ENCODE measurements at regions of chr5 and their contacts with region 1.

Region 1: GRCh38 chr5:141412854-141413539 is at the start of gene PCDHGA10:
- DNase-seq: peak; percentile 86
- H3K4me3 Mint-ChIP-seq: peak within 1 kb of the TSS; percentile 86
- H3K27ac Mint-ChIP-seq: no peak within 1 kb of the TSS
- H3K4me1 Mint-ChIP-seq: peaks cover 12% of the 10 kb centered on the region
- H3K27me3 Mint-ChIP-seq: peaks cover 51% of the 10 kb centered on the region
- total RNA-seq, gene PCDHGA10: 0.07 and 0.21 TPM in 2 replicates

Region 2: DNA sequence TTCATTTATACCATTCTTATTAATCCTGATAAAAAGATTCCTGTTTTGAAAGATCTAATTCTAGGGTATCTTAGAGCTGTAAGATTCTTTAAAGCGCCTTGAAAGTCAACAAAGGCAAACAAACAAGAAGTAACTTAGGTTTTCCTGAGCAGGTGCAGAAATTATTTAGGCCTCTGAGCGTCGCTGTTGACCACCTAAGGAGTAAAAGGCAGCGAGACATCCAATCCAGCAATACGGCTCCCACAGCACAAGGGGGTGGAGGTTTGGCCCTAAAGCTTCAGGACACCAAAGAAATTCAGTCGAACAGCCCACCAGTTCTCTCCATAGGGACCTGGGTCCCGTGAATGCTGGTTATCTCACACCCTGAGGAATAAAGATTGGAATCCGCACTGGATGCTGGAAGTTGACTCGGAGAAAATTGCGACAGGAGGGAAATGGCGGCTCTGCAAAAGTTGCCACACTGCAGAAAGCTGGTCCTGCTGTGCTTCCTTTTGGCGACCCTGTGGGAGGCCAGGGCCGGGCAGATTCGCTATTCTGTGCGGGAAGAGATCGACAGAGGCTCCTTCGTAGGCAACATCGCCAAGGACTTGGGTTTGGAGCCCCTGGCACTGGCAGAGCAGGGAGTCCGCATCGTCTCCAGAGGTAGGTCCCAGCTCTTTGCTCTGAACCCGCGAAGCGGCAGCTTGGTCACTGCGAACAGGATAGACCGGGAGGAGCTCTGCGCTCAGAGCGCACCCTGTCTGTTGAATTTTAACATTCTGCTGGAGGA is 74.3 kb before region 1 on chr5 and contains the start of gene PCDHGA2:
- intact Hi-C with region 1: loop called (anchors 5 kb)
- DNase-seq: peak; percentile 68
- H3K4me3 Mint-ChIP-seq: peak within 1 kb of the TSS; percentile 80
- H3K27ac Mint-ChIP-seq: no peak within 1 kb of the TSS
- H3K4me1 Mint-ChIP-seq: no peaks in the 10 kb centered on the region
- H3K27me3 Mint-ChIP-seq: peaks cover 42% of the 10 kb centered on the region
- total RNA-seq, gene PCDHGA2: 0.07 and 0.12 TPM in 2 replicates

Region 3: DNA sequence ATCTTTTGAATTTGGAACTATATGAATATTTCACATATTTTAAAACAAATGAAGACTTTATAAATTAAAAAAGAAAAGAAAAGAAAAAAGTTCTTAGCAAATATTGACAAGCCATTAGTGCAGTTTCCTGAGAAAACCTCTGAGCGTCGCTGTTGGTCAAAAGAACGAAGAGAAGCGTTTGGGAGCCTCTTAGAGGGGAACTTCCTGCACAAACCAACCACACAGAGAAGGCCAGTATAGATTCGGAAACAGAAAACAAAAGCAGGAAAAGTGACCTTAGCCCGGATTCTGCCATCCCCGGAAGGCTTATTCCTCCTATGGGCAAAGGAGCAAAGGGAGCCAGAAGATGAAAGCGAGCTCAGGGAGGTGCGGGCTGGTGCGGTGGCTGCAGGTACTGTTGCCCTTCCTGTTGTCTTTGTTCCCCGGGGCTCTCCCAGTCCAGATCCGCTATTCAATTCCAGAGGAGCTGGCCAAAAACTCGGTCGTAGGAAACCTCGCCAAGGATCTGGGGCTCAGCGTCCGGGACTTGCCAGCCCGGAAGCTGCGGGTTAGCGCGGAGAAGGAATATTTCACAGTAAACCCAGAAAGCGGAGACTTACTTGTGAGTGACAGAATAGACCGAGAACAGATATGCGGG is 53.1 kb before region 1 on chr5 and contains the start of gene PCDHGB2:
- intact Hi-C with region 1: loop called (anchors 5 kb)
- DNase-seq: peak; percentile 73
- H3K4me3 Mint-ChIP-seq: peak within 1 kb of the TSS; percentile 80
- H3K27ac Mint-ChIP-seq: peak within 1 kb of the TSS; percentile 18
- H3K4me1 Mint-ChIP-seq: no peaks in the 10 kb centered on the region
- H3K27me3 Mint-ChIP-seq: peaks cover 32% of the 10 kb centered on the region
- total RNA-seq, gene PCDHGB2: 0.63 and 0.97 TPM in 2 replicates

Region 4: GRCh38 chr5:141369994-141370848 is 42.8 kb before region 1 on chr5 and contains the start of gene PCDHGB3:
- intact Hi-C with region 1: no loop called
- DNase-seq: peak; percentile 71
- H3K4me3 Mint-ChIP-seq: peak within 1 kb of the TSS; percentile 79
- H3K27ac Mint-ChIP-seq: no peak within 1 kb of the TSS
- H3K4me1 Mint-ChIP-seq: peaks cover 2% of the 10 kb centered on the region
- H3K27me3 Mint-ChIP-seq: peaks cover 17% of the 10 kb centered on the region
- total RNA-seq, gene PCDHGB3: 0.40 and 0.49 TPM in 2 replicates

Region 5: DNA sequence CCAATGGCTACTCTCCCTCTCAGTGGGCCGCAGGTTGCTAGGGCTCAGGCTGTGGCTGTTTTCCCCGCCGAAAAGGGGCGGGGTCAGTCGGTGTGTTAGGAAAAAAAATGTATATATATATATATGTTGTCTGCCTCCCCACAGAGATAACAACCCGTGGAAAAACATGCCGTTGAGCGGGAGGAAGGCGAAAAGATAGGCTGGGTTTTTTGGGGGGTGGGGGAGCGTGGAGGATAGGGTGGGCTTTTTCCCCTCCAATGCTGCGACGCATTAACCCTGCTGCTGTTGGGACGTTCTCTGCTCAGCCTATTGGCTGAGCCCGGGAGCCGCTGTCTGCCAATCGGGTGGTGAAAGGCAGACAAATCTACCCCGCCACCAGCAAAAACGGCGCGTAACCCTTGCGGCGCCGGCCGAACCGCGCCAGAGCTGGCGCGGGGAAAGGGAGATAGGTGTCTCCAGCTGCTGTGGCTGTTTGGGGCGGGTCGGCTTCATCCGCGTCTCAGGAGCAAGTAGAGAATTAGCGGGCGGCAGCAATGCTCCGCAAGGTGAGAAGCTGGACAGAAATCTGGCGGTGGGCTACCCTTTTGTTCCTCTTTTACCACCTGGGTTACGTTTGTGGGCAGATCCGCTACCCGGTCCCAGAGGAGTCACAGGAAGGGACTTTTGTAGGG is 71.8 kb after region 1 on chr5 and contains the start of gene PCDHGC4:
- intact Hi-C with region 1: loop called (anchors 5 kb)
- DNase-seq: no peak
- H3K4me3 Mint-ChIP-seq: no peak within 1 kb of the TSS
- H3K27ac Mint-ChIP-seq: no peak within 1 kb of the TSS
- H3K4me1 Mint-ChIP-seq: no peaks in the 10 kb centered on the region
- H3K27me3 Mint-ChIP-seq: peaks cover 60% of the 10 kb centered on the region
- total RNA-seq, gene PCDHGC4: not detected in 2 replicates

Region 6: GRCh38 chr5:141524604-141525597 is 111.9 kb after region 1 on chr5:
- intact Hi-C with region 1: loop called (anchors 2 kb)
- DNase-seq: peak; percentile 85
- H3K4me3 Mint-ChIP-seq: no peak overlapping the region
- H3K27ac Mint-ChIP-seq: peak overlapping the region; percentile 10
- H3K4me1 Mint-ChIP-seq: peaks cover 29% of the 10 kb centered on the region
- H3K27me3 Mint-ChIP-seq: no peaks in the 10 kb centered on the region

Region 7: GRCh38 chr5:141866149-141867120 is 453.4 kb after region 1 on chr5:
- intact Hi-C with region 1: no loop called
- DNase-seq: no peak
- H3K4me3 Mint-ChIP-seq: no peak overlapping the region
- H3K27ac Mint-ChIP-seq: no peak overlapping the region
- H3K4me1 Mint-ChIP-seq: no peaks in the 10 kb centered on the region
- H3K27me3 Mint-ChIP-seq: peaks cover 33% of the 10 kb centered on the region